HCT116 (cell line): ENCODE measurements at regions of chr10 and their contacts with region 1.

Region 1: DNA sequence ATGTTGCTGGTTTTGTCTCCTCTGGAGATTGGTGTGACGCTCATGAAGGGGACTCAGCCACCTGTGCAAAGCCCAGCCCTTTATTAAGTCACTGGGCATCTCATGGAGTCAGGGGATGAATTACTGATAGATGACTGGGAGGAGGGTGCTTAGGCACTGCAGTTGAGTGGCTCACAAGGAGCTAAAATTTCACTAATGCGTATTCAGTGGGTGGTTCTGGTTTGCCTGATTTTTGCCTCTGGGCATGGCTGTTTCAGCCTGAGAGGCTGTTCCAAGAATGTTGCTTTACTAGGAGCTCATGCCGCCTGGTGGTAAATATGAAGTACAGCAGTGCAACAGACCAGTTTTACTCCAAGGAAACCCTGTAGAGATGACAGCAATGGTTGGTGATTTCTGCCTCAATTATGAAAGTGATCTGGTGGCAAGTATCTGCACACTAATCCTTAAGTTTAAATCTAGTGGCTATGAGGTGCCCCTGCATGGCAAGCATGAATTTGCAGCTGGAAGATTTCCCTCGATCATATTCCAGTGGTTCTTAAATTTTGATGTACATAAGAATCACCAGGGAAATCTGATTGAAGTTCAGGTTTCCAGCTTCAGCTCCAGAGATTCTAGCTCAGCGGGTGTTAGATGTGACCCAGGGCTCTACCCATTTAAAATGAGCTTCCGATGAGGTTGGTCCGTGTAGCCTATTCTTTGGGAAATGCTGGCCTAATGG is 19.9 kb downstream of the ACTA2 start:
- DNase-seq: peak; percentile 46
- ATAC-seq: peak; percentile 85
- H3K4me3 ChIP-seq: no peak overlapping the region
- H3K27ac ChIP-seq: no peak overlapping the region
- H3K4me1 ChIP-seq: peaks cover 7 to 16% of the 10 kb centered on the region in 2 experiments; a peak in 3 of 4 replicates
- H3K27me3 ChIP-seq: no peaks in the 10 kb centered on the region
- CTCF ChIP-seq: peak; percentile 78 to 94 (median 93)
- POLR2A ChIP-seq: no peak
- RAD21 ChIP-seq: peak; percentile 96

Region 2: DNA sequence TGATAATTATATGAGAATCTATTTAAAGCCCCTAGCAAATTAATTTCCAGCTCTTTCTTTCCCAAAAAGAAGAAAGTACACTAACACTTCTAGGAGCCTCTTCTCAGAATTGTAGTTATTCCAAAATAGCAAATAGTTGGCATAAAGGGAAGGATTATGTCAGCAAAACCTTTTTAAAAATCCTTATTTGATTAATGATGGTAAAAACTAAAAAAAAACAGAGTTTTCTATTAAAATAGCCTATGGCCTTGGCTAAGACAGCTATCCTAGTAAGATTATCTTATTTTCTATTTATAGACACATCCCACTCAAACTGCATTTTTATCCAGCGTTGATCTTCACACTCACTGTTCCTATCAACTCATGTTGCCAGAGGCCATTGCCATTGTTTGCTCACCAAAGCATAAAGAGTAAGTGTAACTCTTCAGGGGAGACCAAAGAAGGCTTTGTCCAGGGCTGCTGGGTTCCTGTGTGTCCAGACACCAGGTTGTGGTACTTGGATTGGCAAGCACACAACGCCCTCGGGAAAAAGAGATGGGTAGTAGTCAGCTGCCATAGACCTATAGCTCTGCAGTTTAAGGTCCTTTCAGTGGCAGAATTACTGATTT is 11.6 kb before region 1 on chr10:
- CTCF ChIA-PET with region 1: interaction called, 12 read pairs
- POLR2A ChIA-PET with region 1: no interaction called
- RAD21 ChIA-PET with region 1: no interaction called
- intact Hi-C with region 1: no loop called
- DNase-seq: no peak
- ATAC-seq: no peak
- H3K4me3 ChIP-seq: no peak overlapping the region
- H3K27ac ChIP-seq: no peak overlapping the region
- H3K4me1 ChIP-seq: no peaks in the 10 kb centered on the region
- H3K27me3 ChIP-seq: no peaks in the 10 kb centered on the region
- CTCF ChIP-seq: no peak
- POLR2A ChIP-seq: no peak
- RAD21 ChIP-seq: no peak

Region 3: GRCh38 chr10:88990384-88991160 is 57.9 kb after region 1 on chr10 and contains the start of gene FAS:
- CTCF ChIA-PET with region 1: interaction called, 15 read pairs
- POLR2A ChIA-PET with region 1: no interaction called
- RAD21 ChIA-PET with region 1: interaction called in 1 of 2 experiments, 3 read pairs
- intact Hi-C with region 1: loop called (anchors 1 kb)
- DNase-seq: peak; percentile 56
- ATAC-seq: peak; percentile 87
- H3K4me3 ChIP-seq: peak within 1 kb of the TSS; percentile 73 to 89
- H3K27ac ChIP-seq: peak within 1 kb of the TSS; percentile 83
- H3K4me1 ChIP-seq: peaks cover 0 to 28% of the 10 kb centered on the region in 2 experiments; a peak in 3 of 4 replicates
- H3K27me3 ChIP-seq: no peaks in the 10 kb centered on the region
- CTCF ChIP-seq: no peak
- POLR2A ChIP-seq: no peak
- RAD21 ChIP-seq: no peak
- total RNA-seq, gene FAS: 9.3 TPM

Region 4: GRCh38 chr10:89029785-89030437 is 97.2 kb after region 1 on chr10:
- CTCF ChIA-PET with region 1: interaction called, 6 read pairs
- POLR2A ChIA-PET with region 1: no interaction called
- RAD21 ChIA-PET with region 1: no interaction called
- intact Hi-C with region 1: loop called (anchors 2 kb)
- DNase-seq: peak; percentile 60
- ATAC-seq: peak; percentile 81
- H3K4me3 ChIP-seq: no peak overlapping the region
- H3K27ac ChIP-seq: no peak overlapping the region
- H3K4me1 ChIP-seq: peaks cover 11 to 17% of the 10 kb centered on the region in 2 experiments; a peak in 3 of 4 replicates
- H3K27me3 ChIP-seq: no peaks in the 10 kb centered on the region
- CTCF ChIP-seq: peak; percentile 82 to 83 (median 82)
- POLR2A ChIP-seq: no peak
- RAD21 ChIP-seq: peak; percentile 95

Region 5: DNA sequence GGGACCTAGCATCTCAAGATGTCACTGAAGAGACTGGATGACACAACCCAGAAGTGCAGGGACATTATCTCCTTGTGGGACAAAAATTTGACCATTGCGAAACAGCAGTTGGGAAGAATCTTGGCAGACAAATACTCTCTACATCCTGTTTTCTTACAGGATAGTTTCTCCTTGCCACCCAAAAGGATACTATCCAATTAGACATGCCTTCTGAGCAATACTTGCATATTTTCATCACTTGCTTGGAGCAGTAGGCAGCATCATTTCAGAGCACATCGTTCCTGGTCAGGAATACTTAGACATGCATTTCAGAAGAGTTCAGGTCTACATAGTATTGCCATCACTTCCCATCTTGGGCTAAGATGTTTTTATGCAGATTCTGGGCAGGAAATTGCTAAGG is 114.7 kb after region 1 on chr10:
- CTCF ChIA-PET with region 1: no interaction called
- POLR2A ChIA-PET with region 1: no interaction called
- RAD21 ChIA-PET with region 1: no interaction called
- intact Hi-C with region 1: no loop called
- DNase-seq: no peak
- ATAC-seq: no peak
- H3K4me3 ChIP-seq: no peak overlapping the region
- H3K27ac ChIP-seq: no peak overlapping the region
- H3K4me1 ChIP-seq: no peaks in the 10 kb centered on the region
- H3K27me3 ChIP-seq: no peaks in the 10 kb centered on the region
- CTCF ChIP-seq: no peak
- POLR2A ChIP-seq: no peak
- RAD21 ChIP-seq: no peak

Region 6: GRCh38 chr10:89163265-89163995 is 230.7 kb after region 1 on chr10:
- CTCF ChIA-PET with region 1: no interaction called
- POLR2A ChIA-PET with region 1: no interaction called
- RAD21 ChIA-PET with region 1: no interaction called
- intact Hi-C with region 1: no loop called
- DNase-seq: no peak
- ATAC-seq: no peak
- H3K4me3 ChIP-seq: no peak overlapping the region
- H3K27ac ChIP-seq: no peak overlapping the region
- H3K4me1 ChIP-seq: no peaks in the 10 kb centered on the region
- H3K27me3 ChIP-seq: no peaks in the 10 kb centered on the region
- CTCF ChIP-seq: no peak
- POLR2A ChIP-seq: no peak
- RAD21 ChIP-seq: no peak